Right lobe of liver (tissue), 6 donors: ENCODE measurements at regions of chr1 and their contacts with region 1.

Region 1: DNA sequence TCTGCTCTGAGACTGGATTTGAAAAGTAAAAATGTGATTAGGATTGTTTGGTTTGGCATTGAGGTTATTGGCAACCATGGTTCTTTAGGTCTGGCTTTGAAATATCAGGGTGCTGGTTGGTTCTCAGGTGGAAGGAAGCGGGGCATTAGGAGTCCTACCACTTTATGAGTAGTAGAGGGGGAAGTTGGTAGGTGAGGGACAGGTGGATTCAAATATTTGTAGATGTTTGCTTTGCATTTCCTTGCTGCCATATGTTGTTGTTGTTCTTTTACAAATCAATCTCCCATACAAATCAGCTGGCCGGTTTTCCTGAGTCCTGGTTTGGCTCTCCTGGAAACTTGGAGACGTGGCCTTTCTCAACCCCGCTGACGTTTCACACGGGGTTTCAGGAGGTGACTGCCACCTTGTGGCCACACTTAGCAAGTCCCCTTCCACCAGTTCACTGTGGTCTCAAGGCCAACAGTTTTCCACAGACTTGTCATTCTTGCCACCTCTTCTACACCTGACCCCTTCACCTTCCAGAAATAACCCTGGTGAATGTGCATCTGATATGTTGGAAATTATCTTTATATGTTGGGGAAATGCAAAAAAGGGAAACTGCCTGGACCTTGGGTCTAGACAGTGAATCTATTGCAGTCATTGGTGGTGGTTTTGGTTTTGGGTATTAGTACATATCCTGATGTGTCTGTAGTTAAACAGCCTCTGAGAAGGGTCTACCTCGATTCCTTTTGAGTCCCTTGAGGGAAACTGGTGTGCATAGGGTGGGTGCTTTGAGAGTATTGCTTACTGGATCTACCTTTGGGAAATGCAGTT is 127.0 kb upstream of the KIAA0040 start:
- DNase-seq: peak; percentile 77 to 81 (median 79)
- ATAC-seq: peak; percentile 98 to 99 (median 98)
- H3K4me3 ChIP-seq: no peak overlapping the region
- H3K27ac ChIP-seq: no peak overlapping the region
- H3K4me1 ChIP-seq: no peaks in the 10 kb centered on the region
- H3K27me3 ChIP-seq: no peaks in the 10 kb centered on the region
- CTCF ChIP-seq: peak; percentile 85 to 92 (median 91)
- POLR2A ChIP-seq: no peak

Region 2: GRCh38 chr1:175035865-175036264 is 283.8 kb before region 1 on chr1:
- intact Hi-C with region 1: loop called (anchors 10 kb)
- DNase-seq: no peak
- ATAC-seq: no peak
- H3K4me3 ChIP-seq: no peak overlapping the region
- H3K27ac ChIP-seq: no peak overlapping the region
- H3K4me1 ChIP-seq: no peaks in the 10 kb centered on the region
- H3K27me3 ChIP-seq: no peaks in the 10 kb centered on the region
- CTCF ChIP-seq: no peak
- POLR2A ChIP-seq: no peak

Region 3: DNA sequence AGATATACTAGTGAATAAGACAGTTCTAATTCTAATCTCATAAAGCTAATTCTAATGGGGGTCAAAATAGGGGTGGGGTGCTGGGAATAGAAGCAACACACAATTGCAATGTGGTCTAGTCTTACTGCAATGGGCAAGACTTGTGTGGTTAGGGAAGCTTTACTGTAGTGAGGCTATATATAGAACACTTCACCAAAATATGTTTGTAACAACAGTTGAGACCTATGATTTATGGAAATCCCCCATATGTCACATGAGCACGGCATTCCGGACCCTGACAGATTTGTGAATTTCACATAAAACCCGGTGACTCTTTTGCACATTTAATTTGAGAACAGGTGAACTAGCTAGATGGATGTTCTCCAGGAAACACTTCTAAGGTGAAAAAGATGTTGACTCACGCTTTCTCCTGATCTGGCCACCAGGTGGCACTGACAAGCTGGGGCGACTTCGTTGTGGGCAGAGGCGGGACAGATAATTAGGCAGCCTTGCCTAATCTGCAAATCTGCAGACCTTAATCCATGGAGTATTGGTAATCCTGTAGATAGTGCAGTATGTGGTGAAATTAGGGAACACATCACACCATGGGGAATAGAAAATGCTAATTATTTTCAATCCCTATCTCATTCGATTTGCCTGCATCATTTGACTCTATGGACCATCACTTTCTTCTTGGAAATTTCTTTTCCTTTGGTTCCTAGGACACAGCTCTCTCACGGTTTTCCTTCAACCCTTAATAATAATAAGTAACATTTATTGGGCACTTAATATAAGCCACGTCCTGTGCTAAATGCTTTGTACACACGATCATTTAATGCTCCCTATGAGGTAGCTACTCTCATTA is 164.8 kb before region 1 on chr1:
- intact Hi-C with region 1: loop called (anchors 2 to 5 kb)
- DNase-seq: peak; percentile 73 to 78 (median 77)
- ATAC-seq: peak; percentile 72 to 84 (median 74)
- H3K4me3 ChIP-seq: no peak overlapping the region
- H3K27ac ChIP-seq: no peak overlapping the region
- H3K4me1 ChIP-seq: peaks cover 0 to 12% (median 6%) of the 10 kb centered on the region in 4 donors
- H3K27me3 ChIP-seq: no peaks in the 10 kb centered on the region
- CTCF ChIP-seq: peak; percentile 84 to 96 (median 94)
- POLR2A ChIP-seq: no peak

Region 4: GRCh38 chr1:175353066-175353465 is 33.4 kb after region 1 on chr1:
- intact Hi-C with region 1: no loop called
- DNase-seq: no peak
- ATAC-seq: no peak
- H3K4me3 ChIP-seq: no peak overlapping the region
- H3K27ac ChIP-seq: no peak overlapping the region
- H3K4me1 ChIP-seq: peaks cover 0 to 23% (median 6%) of the 10 kb centered on the region in 4 donors
- H3K27me3 ChIP-seq: no peaks in the 10 kb centered on the region
- CTCF ChIP-seq: no peak
- POLR2A ChIP-seq: no peak